Activated naive CD4-positive, alpha-beta T cell treated with anti-CD3 and anti-CD28 coated beads for 36 hours (primary cell): ENCODE measurements at regions of chr3 and their contacts with region 1.

Region 1: DNA sequence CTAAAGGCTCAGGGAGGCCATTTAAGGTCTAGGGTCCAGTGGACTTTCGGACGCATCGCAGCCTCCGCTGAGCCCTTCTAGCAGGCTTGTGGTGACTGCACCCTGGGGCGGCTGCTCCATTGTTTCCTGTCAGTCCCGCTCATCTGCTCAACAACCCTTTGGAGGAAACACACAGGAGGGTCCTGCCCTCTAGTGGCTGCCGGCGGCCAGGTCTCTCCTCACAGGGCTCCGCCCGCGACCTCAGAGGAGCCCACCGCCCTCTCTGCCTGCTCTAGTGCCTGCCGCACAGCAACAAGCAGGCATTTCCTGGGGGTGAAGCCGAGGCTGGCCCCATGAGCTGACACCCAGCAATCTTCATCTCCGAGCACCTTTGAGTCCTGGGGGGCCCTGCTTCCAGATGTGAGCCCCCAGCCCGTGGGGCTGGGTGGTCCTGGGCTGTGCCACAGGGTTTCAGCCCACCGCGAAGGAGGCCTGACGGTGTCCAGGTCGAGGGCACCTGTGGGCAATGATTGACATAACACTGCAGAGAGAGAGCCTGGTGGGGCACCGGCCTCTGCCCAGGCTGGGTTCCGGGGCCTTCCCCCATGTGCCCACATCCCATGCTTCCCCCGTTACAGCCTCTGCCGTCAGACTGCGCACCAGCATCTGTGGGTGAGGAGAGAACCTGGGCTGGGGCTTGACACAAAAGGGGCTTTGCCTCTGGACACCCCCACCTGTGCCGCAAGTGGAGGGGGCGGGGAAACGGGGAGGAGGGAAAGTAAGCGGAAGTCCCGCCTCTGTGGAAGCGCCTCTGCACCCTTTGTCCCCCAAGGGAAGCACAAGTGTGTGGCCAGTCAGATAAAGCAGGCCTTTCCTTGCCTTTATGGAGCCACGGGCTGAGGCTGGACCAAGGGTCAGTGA is 27.0 kb upstream of the SFMBT1 start:
- DNase-seq: peak; percentile 95
- H3K4me3 Mint-ChIP-seq: peak overlapping the region; percentile 81
- H3K27ac Mint-ChIP-seq: peak overlapping the region; percentile 84
- H3K4me1 Mint-ChIP-seq: peaks cover 17% of the 10 kb centered on the region
- H3K27me3 Mint-ChIP-seq: no peaks in the 10 kb centered on the region

Region 2: GRCh38 chr3:52742418-52743041 is 330.4 kb before region 1 on chr3:
- CTCF ChIA-PET with region 1: interaction called, 3 read pairs
- intact Hi-C with region 1: loop called (anchors 1 kb)
- DNase-seq: no peak
- H3K4me3 Mint-ChIP-seq: no peak overlapping the region
- H3K27ac Mint-ChIP-seq: no peak overlapping the region
- H3K4me1 Mint-ChIP-seq: no peaks in the 10 kb centered on the region
- H3K27me3 Mint-ChIP-seq: no peaks in the 10 kb centered on the region

Region 3: GRCh38 chr3:52851348-52851747 is 221.6 kb before region 1 on chr3:
- CTCF ChIA-PET with region 1: interaction called, 6 read pairs
- intact Hi-C with region 1: loop called (anchors 1 kb)
- DNase-seq: peak; percentile 42
- H3K4me3 Mint-ChIP-seq: no peak overlapping the region
- H3K27ac Mint-ChIP-seq: no peak overlapping the region
- H3K4me1 Mint-ChIP-seq: no peaks in the 10 kb centered on the region
- H3K27me3 Mint-ChIP-seq: no peaks in the 10 kb centered on the region

Region 4: DNA sequence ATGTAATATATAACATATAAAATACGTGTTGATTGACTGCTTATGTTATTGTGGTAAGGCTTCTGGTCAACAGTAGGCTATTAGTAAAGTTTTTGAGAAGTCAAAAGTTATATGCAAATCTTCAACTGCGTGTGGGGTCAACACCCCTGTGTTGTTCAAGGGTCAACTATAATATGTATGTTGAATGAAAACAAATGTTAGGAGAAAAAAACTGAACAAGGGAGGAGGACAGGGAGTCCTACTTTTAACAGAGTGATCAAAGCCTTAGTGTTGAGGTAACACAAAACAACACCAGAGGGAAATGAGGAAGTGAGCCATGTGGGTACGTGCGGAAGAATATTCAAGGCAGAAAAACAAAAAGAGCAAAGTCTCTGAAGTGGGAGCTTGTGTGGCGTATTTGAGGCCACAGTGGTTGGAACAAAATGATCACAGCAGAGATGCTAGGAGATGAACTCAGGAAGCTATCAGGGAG is 89.5 kb before region 1 on chr3:
- CTCF ChIA-PET with region 1: no interaction called
- intact Hi-C with region 1: loop called (anchors 1 kb)
- DNase-seq: peak; percentile 81
- H3K4me3 Mint-ChIP-seq: peak overlapping the region; percentile 31
- H3K27ac Mint-ChIP-seq: peak overlapping the region; percentile 85
- H3K4me1 Mint-ChIP-seq: peaks cover 42% of the 10 kb centered on the region
- H3K27me3 Mint-ChIP-seq: no peaks in the 10 kb centered on the region

Region 5: GRCh38 chr3:53030619-53031449 is 42.1 kb before region 1 on chr3:
- CTCF ChIA-PET with region 1: no interaction called
- intact Hi-C with region 1: no loop called
- DNase-seq: peak; percentile 62
- H3K4me3 Mint-ChIP-seq: peak overlapping the region; percentile 5
- H3K27ac Mint-ChIP-seq: peak overlapping the region; percentile 21
- H3K4me1 Mint-ChIP-seq: peaks cover 45% of the 10 kb centered on the region
- H3K27me3 Mint-ChIP-seq: no peaks in the 10 kb centered on the region

Region 6: DNA sequence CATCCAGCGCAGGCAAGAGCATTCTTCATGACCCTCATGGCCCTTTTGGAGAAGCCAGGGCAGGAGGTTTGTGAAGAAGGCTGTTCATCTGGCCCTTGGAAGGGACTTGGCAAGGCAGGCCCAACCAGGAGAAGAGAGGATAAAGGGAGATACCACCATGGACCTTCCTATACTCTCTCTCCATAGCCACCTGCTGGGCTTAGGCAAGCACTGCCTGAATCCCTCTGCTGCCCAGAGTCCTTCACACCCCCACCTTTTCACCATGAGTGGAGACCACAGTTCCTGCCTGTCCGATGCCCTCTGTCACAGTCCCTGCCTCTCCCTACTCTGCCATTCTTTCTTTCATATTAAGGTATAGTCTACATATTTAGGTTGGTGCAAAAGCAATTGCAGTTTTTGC is 16.5 kb before region 1 on chr3:
- CTCF ChIA-PET with region 1: no interaction called
- intact Hi-C with region 1: no loop called
- DNase-seq: no peak
- H3K4me3 Mint-ChIP-seq: no peak overlapping the region
- H3K27ac Mint-ChIP-seq: no peak overlapping the region
- H3K4me1 Mint-ChIP-seq: no peaks in the 10 kb centered on the region
- H3K27me3 Mint-ChIP-seq: no peaks in the 10 kb centered on the region

Region 7: DNA sequence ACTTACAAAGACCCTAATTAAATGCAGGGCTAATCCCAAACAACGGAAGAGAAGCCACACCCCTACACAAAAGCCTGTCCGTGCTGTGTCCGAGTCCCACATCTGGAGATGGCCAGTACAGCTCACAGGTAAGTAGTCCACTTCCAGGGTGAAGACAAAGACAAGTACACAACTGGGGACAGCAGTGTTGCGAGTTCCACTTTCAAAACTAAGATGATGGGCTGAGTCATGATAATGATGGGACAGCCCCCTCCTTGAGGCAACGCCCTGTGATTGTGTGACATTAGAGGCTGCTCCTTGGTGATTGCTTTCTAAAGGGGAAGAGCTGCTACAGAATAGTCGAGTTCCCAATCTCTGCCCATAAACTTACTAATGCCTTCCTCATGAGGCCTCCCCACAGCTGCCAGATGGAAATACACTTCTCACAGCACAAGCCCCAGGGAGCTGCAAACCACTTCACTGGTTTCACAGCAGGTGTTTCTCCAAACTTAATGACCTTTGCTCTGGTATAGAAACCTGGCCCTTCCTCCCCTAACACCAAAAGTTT is 29.8 kb after region 1 on chr3:
- CTCF ChIA-PET with region 1: no interaction called
- intact Hi-C with region 1: loop called (anchors 1 kb)
- DNase-seq: peak; percentile 84
- H3K4me3 Mint-ChIP-seq: peak overlapping the region; percentile 11
- H3K27ac Mint-ChIP-seq: peak overlapping the region; percentile 80
- H3K4me1 Mint-ChIP-seq: peaks cover 68% of the 10 kb centered on the region
- H3K27me3 Mint-ChIP-seq: no peaks in the 10 kb centered on the region

Region 8: DNA sequence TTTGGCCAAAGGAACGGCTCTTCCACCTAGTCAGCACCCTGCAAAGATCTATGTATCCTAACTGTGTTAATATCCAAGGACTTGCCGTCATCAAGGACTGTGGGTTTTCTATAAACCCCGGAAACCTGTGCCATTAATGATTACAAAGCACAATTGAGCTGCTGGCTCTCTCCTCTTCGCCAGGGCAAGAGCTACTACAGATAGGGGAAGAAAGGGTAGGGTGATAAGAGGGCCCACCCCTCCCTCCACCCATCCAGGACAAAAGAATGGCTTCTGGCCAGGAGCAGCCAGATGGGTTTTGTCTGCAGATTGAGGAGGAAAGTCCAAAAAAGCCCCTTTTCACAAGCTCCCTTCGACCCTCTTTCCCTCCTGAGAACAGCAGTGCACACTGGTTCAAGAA is 47.4 kb after region 1 on chr3:
- CTCF ChIA-PET with region 1: no interaction called
- intact Hi-C with region 1: no loop called
- DNase-seq: no peak
- H3K4me3 Mint-ChIP-seq: no peak overlapping the region
- H3K27ac Mint-ChIP-seq: no peak overlapping the region
- H3K4me1 Mint-ChIP-seq: no peaks in the 10 kb centered on the region
- H3K27me3 Mint-ChIP-seq: no peaks in the 10 kb centered on the region